Activated CD4-positive, alpha-beta T cell treated with anti-CD3 and anti-CD28 coated beads for 36 hours (primary cell): ENCODE measurements at regions of chr11 and their contacts with region 1.

Region 1: GRCh38 chr11:74018331-74019005 is 9.6 kb upstream of the UCP3 start:
- DNase-seq: no peak
- ATAC-seq: no peak
- H3K4me3 Mint-ChIP-seq: no peak overlapping the region
- H3K27ac Mint-ChIP-seq: no peak overlapping the region
- H3K4me1 Mint-ChIP-seq: peaks cover 42% of the 10 kb centered on the region
- H3K27me3 Mint-ChIP-seq: no peaks in the 10 kb centered on the region

Region 2: GRCh38 chr11:73995247-73995646 is 23.2 kb before region 1 on chr11:
- CTCF ChIA-PET with region 1: interaction called, 11 read pairs
- POLR2A ChIA-PET with region 1: interaction called, 20 read pairs
- intact Hi-C with region 1: loop called (anchors 1 kb)
- DNase-seq: no peak
- ATAC-seq: peak; percentile 80
- H3K4me3 Mint-ChIP-seq: peak overlapping the region; percentile 37
- H3K27ac Mint-ChIP-seq: peak overlapping the region; percentile 92
- H3K4me1 Mint-ChIP-seq: peaks cover 72% of the 10 kb centered on the region
- H3K27me3 Mint-ChIP-seq: no peaks in the 10 kb centered on the region

Region 3: DNA sequence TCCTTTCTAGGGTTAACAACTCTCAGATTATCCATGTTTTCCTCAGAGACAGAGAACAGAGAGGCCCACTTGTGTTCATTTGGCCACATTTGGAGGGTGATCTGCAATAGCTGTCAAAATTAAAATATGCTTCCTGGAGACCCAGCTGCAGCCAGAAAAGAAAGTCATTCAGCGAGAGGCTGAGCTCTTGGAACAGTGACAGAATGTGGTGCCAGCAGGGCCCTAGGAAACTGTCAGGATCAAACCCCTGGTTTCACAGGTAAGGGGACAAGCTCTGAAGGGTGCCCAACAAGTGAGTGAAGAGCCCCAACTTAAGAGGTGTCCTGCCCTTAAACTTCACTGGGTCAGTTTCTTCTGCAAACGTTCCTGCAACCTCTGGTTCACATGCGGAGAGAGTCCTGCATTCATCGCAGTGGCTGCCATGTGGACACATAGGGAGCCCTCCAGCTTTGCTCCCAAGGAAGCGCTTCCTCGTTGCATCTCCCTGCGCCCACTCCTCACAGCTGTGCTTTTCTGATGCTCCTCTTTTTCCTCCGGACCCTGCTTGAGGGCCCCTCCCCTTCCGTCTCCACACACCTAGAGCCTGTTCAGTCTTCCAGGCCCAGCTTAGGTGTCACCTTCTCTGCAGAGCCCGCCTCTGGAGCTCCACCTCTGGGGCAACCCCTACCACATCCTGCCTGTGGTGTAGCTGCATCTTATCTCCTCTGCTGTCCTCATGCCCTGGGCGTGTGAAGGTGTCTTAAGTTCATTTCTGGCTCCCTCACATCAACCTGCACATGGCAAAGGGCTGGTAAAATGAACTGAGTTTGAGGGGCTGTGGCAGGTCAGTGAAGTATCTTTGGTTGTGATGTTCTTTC is 13.5 kb before region 1 on chr11:
- CTCF ChIA-PET with region 1: interaction called, 7 read pairs
- POLR2A ChIA-PET with region 1: interaction called, 10 read pairs
- intact Hi-C with region 1: no loop called
- DNase-seq: peak; percentile 90
- ATAC-seq: peak; percentile 99
- H3K4me3 Mint-ChIP-seq: no peak overlapping the region
- H3K27ac Mint-ChIP-seq: peak overlapping the region; percentile 90
- H3K4me1 Mint-ChIP-seq: peaks cover 60% of the 10 kb centered on the region
- H3K27me3 Mint-ChIP-seq: no peaks in the 10 kb centered on the region